ENCODE measurements at regions of chr15 and their contacts with region 1.

Region 1: GRCh38 chr15:56918046-56918938 is at the start of gene TCF12:
- DNase-seq: peak; percentile 89
- H3K4me3 Mint-ChIP-seq: peak within 1 kb of the TSS; percentile 81
- H3K27ac Mint-ChIP-seq: peak within 1 kb of the TSS; percentile 63
- H3K4me1 Mint-ChIP-seq: peaks cover 29% of the 10 kb centered on the region
- H3K27me3 Mint-ChIP-seq: no peaks in the 10 kb centered on the region
- total RNA-seq, gene TCF12: 62.4 to 62.8 TPM

Region 2: GRCh38 chr15:56886932-56887781 is 31.1 kb before region 1 on chr15:
- CTCF ChIA-PET with region 1: interaction called, 7 read pairs
- POLR2A ChIA-PET with region 1: interaction called, 60 read pairs
- DNase-seq: peak; percentile 80
- H3K4me3 Mint-ChIP-seq: peak overlapping the region; percentile 76
- H3K27ac Mint-ChIP-seq: peak overlapping the region; percentile 62
- H3K4me1 Mint-ChIP-seq: peaks cover 23% of the 10 kb centered on the region
- H3K27me3 Mint-ChIP-seq: peaks cover 2% of the 10 kb centered on the region

Region 3: DNA sequence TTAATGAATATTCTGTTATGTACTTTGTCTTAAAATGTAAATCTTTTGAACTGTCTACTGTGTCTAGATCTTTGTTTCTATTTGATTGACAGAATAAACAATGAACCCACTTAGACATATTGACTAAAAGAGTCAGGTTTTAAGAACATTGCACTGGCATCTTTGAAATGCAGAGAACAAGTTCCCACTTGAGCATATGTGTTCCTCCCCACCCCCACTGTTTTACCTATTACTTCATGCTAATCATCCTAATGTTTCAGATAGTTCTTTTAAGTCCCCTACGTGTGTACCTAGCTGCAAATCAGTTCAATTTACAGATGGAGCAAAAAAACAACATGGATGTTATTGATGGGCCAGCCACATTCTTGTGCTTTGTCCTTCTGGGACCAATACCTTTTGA is 11.5 kb before region 1 on chr15:
- CTCF ChIA-PET with region 1: no interaction called
- POLR2A ChIA-PET with region 1: interaction called, 19 read pairs
- DNase-seq: no peak
- H3K4me3 Mint-ChIP-seq: no peak overlapping the region
- H3K27ac Mint-ChIP-seq: no peak overlapping the region
- H3K4me1 Mint-ChIP-seq: peaks cover 6% of the 10 kb centered on the region
- H3K27me3 Mint-ChIP-seq: no peaks in the 10 kb centered on the region

Measured in activated CD4-positive, alpha-beta memory T cell treated with anti-CD3 and anti-CD28 coated beads, Interleukin-2, amount 10 ng/mL, durations not matched to agents 7 days and 5 days (primary cell).